ENCODE measurements at regions of chr6 and their contacts with region 1.

Region 1: GRCh38 chr6:39980839-39981580 is 46.7 kb upstream of the MOCS1 start:
- DNase-seq: peak; percentile 49
- H3K4me3 ChIP-seq: no peak overlapping the region
- H3K27ac ChIP-seq: no peak overlapping the region
- H3K4me1 ChIP-seq: peaks cover 4% of the 10 kb centered on the region
- H3K27me3 ChIP-seq: no peaks in the 10 kb centered on the region
- CTCF ChIP-seq: peak in 2 of 3 experiments; percentile 48 to 52
- POLR2A ChIP-seq: no peak

Region 2: DNA sequence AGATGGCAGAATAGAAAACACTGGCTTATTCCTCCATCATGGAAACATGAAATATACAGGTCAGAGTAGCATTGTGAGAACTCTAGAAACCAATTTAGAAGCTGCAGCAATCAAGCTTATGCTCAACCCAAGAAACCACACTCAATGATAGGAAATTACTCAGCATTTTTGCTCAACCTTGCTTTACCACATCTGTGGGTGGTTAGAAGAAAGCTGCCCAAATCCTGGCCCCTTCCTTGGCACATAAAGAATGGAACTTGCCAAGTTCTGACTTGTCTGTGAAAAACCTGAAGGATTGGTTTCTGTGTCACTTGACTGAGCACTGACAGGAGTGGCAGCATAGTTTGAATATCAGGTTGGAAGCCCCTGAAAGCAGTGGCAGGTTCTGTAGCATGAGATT is 61.2 kb after region 1 on chr6:
- intact Hi-C with region 1: no loop called
- DNase-seq: no peak
- H3K4me3 ChIP-seq: no peak overlapping the region
- H3K27ac ChIP-seq: no peak overlapping the region
- H3K4me1 ChIP-seq: no peaks in the 10 kb centered on the region
- H3K27me3 ChIP-seq: no peaks in the 10 kb centered on the region
- CTCF ChIP-seq: no peak
- POLR2A ChIP-seq: no peak

Region 3: DNA sequence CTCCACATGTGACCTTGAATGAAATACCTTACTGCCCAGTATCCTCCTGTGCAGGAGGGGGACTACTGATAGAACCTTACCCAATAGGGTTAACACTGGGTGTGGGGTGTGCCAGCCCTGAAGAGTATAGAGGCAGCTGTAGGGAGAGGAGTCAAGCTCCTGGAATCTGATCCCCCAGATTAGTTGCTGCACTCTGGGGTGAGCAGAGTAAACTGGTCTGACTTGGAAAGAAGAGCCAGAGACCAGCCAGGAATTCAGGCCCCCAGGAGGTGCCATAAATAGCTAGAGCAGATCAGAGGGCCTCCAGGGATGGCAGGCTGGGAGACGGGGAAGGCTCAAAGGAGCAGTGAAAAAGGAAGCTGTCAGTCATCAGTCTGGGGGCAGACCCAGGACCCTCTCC is 1068.5 kb after region 1 on chr6:
- intact Hi-C with region 1: loop called (anchors 5 kb)
- DNase-seq: no peak
- H3K4me3 ChIP-seq: no peak overlapping the region
- H3K27ac ChIP-seq: no peak overlapping the region
- H3K4me1 ChIP-seq: no peaks in the 10 kb centered on the region
- H3K27me3 ChIP-seq: no peaks in the 10 kb centered on the region
- CTCF ChIP-seq: no peak
- POLR2A ChIP-seq: no peak

Measured in testis (tissue), 5 donors.